GM10248 (cell line): ENCODE measurements at regions of chr16 and their contacts with region 1.

Region 1: GRCh38 chr16:46555951-46556350 is 65.2 kb downstream of the SHCBP1 start:
- DNase-seq: no peak
- CTCF ChIP-seq: no peak

Region 2: DNA sequence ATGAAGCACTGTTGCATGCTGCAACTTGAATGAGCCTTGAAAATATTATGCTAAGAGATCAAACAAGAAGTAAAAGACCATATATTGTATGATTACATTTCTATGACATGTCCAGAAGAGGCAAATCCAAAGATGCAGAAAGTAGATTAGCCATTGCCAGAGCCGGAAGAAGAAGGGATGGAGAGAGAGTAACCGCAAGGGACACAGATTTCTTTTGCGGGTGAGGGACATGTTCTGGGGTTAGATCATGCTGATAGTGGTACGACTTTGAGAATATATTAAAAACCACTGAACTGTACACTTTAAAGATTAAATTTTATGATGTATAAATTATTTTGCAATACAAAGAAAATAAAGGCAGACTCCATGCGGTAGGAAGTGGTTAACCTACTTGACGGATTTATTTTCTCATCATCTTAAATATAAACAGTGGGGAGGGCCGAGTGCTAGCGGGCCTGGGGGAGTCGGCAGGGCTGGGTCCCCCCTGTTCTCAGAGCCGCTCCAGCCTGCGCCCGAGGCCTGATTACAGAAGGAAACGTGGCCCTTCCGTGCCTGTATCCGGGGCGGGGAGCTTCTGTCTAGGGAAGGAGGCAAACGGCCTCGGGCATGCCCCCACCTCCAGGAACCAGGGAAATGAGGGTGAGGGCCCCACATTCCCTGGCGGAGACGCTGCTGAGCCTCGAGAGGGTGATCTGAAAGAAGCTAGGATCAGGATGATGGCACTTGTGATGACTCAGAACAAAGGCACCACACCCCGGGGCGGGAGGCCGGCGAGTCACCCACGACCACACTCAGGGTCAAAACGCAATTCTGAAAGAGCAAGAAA is 17.3 kb after region 1 on chr16:
- CTCF ChIA-PET with region 1: interaction called, 26 read pairs
- POLR2A ChIA-PET with region 1: no interaction called
- DNase-seq: peak; percentile 25
- CTCF ChIP-seq: no peak

Region 3: DNA sequence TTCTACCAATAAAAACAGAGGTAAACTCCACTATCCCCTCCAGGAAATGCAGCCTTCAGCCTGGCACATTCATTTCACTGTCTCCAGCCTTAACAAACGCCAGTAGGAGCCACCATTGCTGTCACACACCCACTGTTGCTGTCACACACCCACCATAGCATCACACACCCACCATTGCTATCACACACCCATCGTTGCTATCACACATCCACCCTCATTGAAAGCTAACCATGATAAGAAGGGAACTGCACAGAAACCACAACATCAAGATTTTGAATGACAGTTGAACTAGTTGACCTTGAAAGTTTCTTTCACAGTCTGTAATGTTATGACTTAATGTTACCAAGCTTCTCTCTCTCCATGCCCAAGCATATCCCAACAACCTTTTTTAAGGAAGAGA is 27.1 kb after region 1 on chr16:
- CTCF ChIA-PET with region 1: interaction called, 26 read pairs
- POLR2A ChIA-PET with region 1: no interaction called
- DNase-seq: no peak
- CTCF ChIP-seq: no peak